ENCODE measurements at regions of chr7 and their contacts with region 1.

Region 1: GRCh38 chr7:90759710-90760109 is 163.6 kb downstream of the CDK14 start:
- DNase-seq: no peak
- ATAC-seq: no peak
- H3K4me3 ChIP-seq: no peak overlapping the region
- H3K27ac ChIP-seq: no peak overlapping the region
- H3K4me1 ChIP-seq: peaks cover 11% of the 10 kb centered on the region
- H3K27me3 ChIP-seq: no peaks in the 10 kb centered on the region
- CTCF ChIP-seq: no peak
- EP300 ChIP-seq: no peak
- POLR2A ChIP-seq: no peak
- RAD21 ChIP-seq: no peak

Region 2: GRCh38 chr7:90749262-90749661 is 10.4 kb before region 1 on chr7:
- CTCF ChIA-PET with region 1: interaction called, 9 read pairs
- POLR2A ChIA-PET with region 1: interaction called, 6 read pairs
- RAD21 ChIA-PET with region 1: no interaction called
- SMC1A ChIA-PET with region 1: interaction called, 12 read pairs
- in situ Hi-C with region 1: no loop called
- intact Hi-C with region 1: no loop called
- DNase-seq: no peak
- ATAC-seq: peak; percentile 22; the same call in 1 of the 3 replicates
- H3K4me3 ChIP-seq: no peak overlapping the region
- H3K27ac ChIP-seq: no peak overlapping the region
- H3K4me1 ChIP-seq: no peaks in the 10 kb centered on the region
- H3K27me3 ChIP-seq: no peaks in the 10 kb centered on the region
- CTCF ChIP-seq: no peak
- EP300 ChIP-seq: no peak
- POLR2A ChIP-seq: no peak
- RAD21 ChIP-seq: no peak

Measured in GM12878 (cell line).